ENCODE measurements at regions of chr10 and their contacts with region 1.

Region 1: DNA sequence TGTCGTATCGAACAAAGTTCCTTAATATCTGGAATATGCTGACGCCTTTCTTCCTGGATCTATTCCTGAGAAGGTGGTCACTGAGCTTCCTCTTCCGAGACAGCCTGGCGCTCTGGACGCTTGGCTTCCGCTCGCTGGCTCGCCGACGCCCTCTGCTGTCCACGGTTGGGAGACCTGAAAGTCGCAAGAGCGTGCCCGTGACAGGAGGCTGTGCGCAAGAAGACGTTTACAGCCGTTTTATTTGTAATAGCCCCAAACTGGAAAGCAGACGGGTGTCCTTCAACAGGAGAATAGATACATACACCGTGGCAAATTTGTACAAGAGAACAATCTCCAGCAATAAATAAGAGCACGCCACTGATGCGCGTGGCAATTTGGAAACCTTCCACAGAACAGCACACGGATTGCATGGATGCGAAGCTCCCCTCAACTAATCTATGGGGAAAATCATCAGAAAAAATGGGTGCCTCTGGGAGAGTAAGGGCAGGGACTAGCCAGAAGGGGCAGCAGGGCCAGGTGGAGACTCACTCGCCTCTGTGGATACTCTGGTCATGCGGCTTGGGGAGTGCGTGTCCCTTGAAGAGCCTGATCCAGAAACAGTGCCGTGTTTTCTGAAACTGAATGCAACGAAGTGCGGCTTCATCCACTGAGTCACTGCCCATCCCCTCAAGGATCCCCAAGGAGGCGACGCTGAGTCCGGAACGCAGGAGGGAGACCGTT is 41.5 kb upstream of the BNIP3 start:
- DNase-seq: peak; percentile 37
- ATAC-seq: peak; percentile 90
- H3K4me3 ChIP-seq: peak overlapping the region; percentile 43 to 57
- H3K27ac ChIP-seq: no peak overlapping the region
- H3K4me1 ChIP-seq: peaks cover 4 to 16% of the 10 kb centered on the region in 2 experiments; a peak in 3 of 4 replicates
- H3K27me3 ChIP-seq: no peaks in the 10 kb centered on the region
- CTCF ChIP-seq: peak; percentile 65 to 74 (median 73)
- POLR2A ChIP-seq: no peak
- RAD21 ChIP-seq: peak; percentile 75

Region 2: GRCh38 chr10:131885391-131886161 is 137.7 kb before region 1 on chr10:
- CTCF ChIA-PET with region 1: interaction called, 13 read pairs
- POLR2A ChIA-PET with region 1: no interaction called
- RAD21 ChIA-PET with region 1: interaction called in 1 of 2 experiments, 7 read pairs
- intact Hi-C with region 1: loop called (anchors 1 kb)
- DNase-seq: no peak
- ATAC-seq: peak; percentile 95
- H3K4me3 ChIP-seq: no peak overlapping the region
- H3K27ac ChIP-seq: no peak overlapping the region
- H3K4me1 ChIP-seq: peaks cover 11 to 31% of the 10 kb centered on the region in 2 experiments
- H3K27me3 ChIP-seq: no peaks in the 10 kb centered on the region
- CTCF ChIP-seq: peak; percentile 65 to 88 (median 81)
- POLR2A ChIP-seq: no peak
- RAD21 ChIP-seq: peak; percentile 86

Region 3: GRCh38 chr10:132142411-132143161 is 119.3 kb after region 1 on chr10:
- CTCF ChIA-PET with region 1: no interaction called
- POLR2A ChIA-PET with region 1: no interaction called
- RAD21 ChIA-PET with region 1: no interaction called
- intact Hi-C with region 1: loop called (anchors 1 kb)
- DNase-seq: no peak
- ATAC-seq: peak; percentile 95
- H3K4me3 ChIP-seq: no peak overlapping the region
- H3K27ac ChIP-seq: no peak overlapping the region
- H3K4me1 ChIP-seq: peaks cover 0 to 3% of the 10 kb centered on the region in 2 experiments; a peak in 1 of 4 replicates
- H3K27me3 ChIP-seq: no peaks in the 10 kb centered on the region
- CTCF ChIP-seq: peak; percentile 51 to 70 (median 57); a peak in 5 of 6 replicates
- POLR2A ChIP-seq: no peak
- RAD21 ChIP-seq: peak; percentile 75